ENCODE measurements at regions of chr5 and their contacts with region 1.

Region 1: GRCh38 chr5:176373100-176373818 is 8.0 kb downstream of the ARL10 start:
- DNase-seq: no peak
- H3K4me3 Mint-ChIP-seq: no peak overlapping the region
- H3K27ac Mint-ChIP-seq: no peak overlapping the region
- H3K4me1 Mint-ChIP-seq: peaks cover 6% of the 10 kb centered on the region
- H3K27me3 Mint-ChIP-seq: no peaks in the 10 kb centered on the region
- CTCF ChIP-seq: no peak

Region 2: DNA sequence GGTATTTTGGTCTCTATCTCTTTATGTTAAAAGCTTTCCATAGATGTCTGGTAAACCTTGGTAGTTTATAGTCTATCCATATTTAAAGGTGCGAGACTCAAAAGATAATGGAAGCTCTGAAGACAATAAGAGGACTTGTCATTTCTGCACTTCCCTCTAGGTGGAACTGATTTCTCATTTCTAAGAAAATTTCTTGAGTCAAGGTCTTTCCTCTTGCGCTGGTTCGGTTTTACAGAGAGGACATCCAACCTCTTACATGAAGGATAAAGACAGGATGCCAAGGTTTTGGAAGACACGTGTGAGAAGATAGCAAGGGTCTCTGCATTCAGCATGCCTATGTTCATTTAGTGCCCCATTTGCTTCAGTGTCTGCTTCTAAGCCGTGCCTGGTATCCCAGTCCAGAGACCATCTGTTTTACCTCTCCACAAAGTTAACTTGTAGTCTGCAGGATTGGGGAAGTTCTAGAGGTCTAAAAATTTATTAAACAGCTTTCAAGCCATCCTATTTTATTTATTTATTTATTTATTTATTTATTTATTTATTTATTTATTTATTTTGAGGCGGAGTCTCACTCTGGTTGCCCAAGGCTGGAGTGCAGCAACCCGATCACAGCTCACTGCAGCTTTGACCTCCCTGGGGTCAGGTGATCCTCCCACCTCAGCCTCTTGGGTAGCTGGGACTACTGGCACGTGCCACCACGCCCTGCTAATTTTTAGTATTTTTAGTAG is 53.3 kb before region 1 on chr5:
- CTCF ChIA-PET with region 1: no interaction called
- POLR2A ChIA-PET with region 1: no interaction called
- intact Hi-C with region 1: no loop called
- DNase-seq: peak; percentile 25
- H3K4me3 Mint-ChIP-seq: no peak overlapping the region
- H3K27ac Mint-ChIP-seq: no peak overlapping the region
- H3K4me1 Mint-ChIP-seq: no peaks in the 10 kb centered on the region
- H3K27me3 Mint-ChIP-seq: no peaks in the 10 kb centered on the region
- CTCF ChIP-seq: peak; percentile 15

Region 3: DNA sequence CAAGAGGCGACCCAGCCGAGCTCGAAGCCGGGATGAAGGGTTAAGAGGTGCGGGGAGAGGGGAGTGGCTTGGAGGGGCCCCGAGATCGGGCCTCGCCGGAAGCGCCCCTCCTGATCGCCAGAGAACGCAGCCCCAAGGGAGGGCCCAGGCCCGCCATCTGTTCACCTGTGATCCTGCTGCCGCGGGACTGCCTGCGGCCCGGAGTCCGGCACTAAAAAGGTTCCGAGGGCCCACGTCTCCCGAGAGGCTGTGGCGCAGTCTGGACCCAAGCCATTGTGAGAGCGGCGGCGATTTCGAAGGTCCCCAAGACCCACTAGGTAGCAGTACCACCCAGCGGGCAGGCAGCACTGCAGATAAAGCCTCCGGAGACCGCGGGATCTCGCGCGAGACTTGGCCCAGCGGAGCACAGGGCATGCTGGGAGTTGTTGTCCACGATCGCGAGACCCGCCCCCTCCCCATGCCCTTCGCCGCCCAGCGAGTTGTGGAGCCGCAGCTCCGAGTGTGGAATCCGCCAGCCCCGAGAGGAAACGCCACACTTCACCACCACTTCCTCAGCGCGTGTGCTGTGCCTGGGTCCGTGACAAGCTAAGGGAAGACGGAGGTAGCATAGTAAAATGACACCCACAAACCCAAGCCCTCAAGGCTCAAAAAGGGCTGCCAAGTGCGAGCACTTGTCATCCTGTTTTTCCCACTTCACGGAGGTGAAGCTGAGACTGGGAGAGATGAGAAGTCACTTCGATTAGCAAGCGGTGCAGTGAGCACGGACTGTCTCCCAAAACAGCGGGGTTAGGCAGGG is 11.6 kb before region 1 on chr5 and contains the start of gene KIAA1191:
- CTCF ChIA-PET with region 1: interaction called, 5 read pairs
- POLR2A ChIA-PET with region 1: interaction called, 10 read pairs
- intact Hi-C with region 1: no loop called
- DNase-seq: peak; percentile 94
- H3K4me3 Mint-ChIP-seq: peak within 1 kb of the TSS; percentile 98
- H3K27ac Mint-ChIP-seq: peak within 1 kb of the TSS; percentile 97
- H3K4me1 Mint-ChIP-seq: peaks cover 18% of the 10 kb centered on the region
- H3K27me3 Mint-ChIP-seq: no peaks in the 10 kb centered on the region
- CTCF ChIP-seq: peak; percentile 25
- total RNA-seq, gene KIAA1191: 83.8 and 92.0 TPM in 2 replicates

Region 4: DNA sequence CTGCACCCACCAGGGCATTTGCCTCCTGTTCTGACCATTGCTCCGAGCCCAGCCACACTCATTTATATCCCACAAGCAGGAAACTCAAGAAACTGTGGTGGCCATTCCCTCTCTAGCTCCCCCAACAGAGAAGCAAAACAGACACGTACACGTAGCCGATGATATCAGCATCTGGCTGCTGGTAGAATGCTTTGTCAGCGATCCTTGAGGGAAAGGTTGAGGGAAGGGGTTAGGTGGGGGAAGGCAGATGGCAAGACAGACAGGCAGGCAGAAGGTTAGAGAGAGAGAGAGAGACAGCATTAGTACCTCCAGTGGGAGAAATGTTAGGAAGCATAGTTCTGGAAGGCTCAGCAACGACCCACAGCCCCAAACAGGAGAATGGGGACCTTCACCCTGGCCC is 23.1 kb after region 1 on chr5:
- CTCF ChIA-PET with region 1: no interaction called
- POLR2A ChIA-PET with region 1: no interaction called
- intact Hi-C with region 1: no loop called
- DNase-seq: no peak
- H3K4me3 Mint-ChIP-seq: no peak overlapping the region
- H3K27ac Mint-ChIP-seq: peak overlapping the region; percentile 17
- H3K4me1 Mint-ChIP-seq: peaks cover 14% of the 10 kb centered on the region
- H3K27me3 Mint-ChIP-seq: no peaks in the 10 kb centered on the region
- CTCF ChIP-seq: no peak